ENCODE measurements at regions of chr4 and their contacts with region 1.

Region 1: GRCh38 chr4:40325189-40326019 is 9.7 kb upstream of the CHRNA9 start:
- DNase-seq: no peak
- H3K4me3 ChIP-seq: no peak overlapping the region
- H3K27ac ChIP-seq: no peak overlapping the region
- H3K4me1 ChIP-seq: peaks cover 2 to 37% (median 4%) of the 10 kb centered on the region in 6 donors
- H3K27me3 ChIP-seq: no peaks in the 10 kb centered on the region
- CTCF ChIP-seq: peak; percentile 71 to 87 (median 82)
- POLR2A ChIP-seq: no peak

Region 2: DNA sequence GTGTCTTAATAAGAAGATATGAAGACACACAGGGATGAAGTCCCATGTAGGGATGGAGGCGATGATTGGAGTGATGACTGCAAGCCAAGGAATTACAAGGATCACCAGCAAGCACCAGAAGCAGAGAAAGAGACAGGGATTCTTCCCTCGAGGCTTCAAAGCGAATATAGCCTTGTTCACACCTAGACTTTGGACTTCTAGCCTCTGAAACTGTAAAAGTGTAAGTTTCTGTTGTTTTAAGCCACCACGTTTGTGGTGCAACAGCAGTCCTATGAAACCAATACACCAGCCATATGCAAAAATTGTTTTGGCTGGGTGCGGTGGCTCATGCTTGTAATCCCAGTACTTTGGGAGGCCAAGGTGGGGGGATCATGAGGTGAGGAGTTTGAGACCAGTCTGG is 337.9 kb before region 1 on chr4:
- intact Hi-C with region 1: loop called (anchors 10 kb)
- DNase-seq: no peak
- H3K4me3 ChIP-seq: no peak overlapping the region
- H3K27ac ChIP-seq: no peak overlapping the region
- H3K4me1 ChIP-seq: no peaks in the 10 kb centered on the region
- H3K27me3 ChIP-seq: no peaks in the 10 kb centered on the region
- CTCF ChIP-seq: no peak
- POLR2A ChIP-seq: no peak